ENCODE measurements at regions of chr6 and their contacts with region 1.

Region 1: DNA sequence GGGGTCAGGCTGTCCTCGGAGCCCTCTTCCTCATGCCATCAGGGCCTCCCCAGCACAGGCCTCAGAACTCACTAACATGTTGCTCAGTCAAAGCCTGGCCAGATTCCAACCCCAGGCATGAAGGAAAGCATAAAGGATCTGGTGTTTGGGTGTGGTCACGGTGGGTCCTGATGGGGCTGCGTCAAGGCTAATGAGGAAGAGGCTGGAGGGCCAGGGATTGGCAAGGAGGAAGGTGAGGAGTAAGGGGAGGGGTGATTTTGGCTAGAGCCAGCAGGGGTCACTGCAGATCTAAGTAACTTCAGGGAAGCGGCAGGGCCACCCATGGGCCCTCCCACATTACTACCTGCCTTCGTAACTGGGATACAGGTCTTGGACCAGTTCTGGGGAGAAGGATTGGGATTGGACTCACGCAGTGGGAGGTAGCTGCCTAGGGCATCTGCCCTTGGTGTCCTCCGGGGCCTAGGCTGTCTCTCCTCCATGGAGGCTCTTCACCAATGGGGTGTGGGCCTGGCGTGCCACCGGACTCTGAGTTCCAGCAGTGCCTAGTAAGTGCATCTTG is 36.2 kb upstream of the MRPS18A start:
- DNase-seq: peak; percentile 83
- ATAC-seq: peak; percentile 83
- H3K4me3 Mint-ChIP-seq: no peak overlapping the region
- H3K27ac Mint-ChIP-seq: no peak overlapping the region
- H3K4me1 Mint-ChIP-seq: peaks cover 30% of the 10 kb centered on the region
- H3K27me3 Mint-ChIP-seq: peaks cover 18% of the 10 kb centered on the region

Region 2: DNA sequence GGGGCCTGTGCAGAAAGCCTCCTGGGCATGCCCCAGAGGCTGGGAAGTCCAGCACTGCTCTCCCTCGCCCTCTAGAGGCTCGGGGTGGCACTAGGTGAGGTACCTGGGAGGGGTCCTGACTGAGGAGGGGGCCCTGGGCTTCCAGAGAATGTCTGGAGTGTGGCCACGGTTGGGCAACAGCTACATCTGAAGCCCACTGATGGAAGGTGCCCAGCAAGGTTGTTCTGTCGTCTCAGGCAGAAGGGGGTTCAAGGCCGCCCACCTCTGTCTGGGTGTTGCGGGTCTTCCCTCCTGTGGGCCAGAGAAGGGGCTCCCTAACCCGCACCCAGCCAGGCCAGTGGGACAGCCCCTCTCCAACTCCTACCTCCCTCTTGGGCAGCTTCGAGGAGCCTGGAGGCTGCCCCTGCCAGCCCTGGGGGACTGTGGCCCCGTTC is 34.8 kb after region 1 on chr6:
- CTCF ChIA-PET with region 1: interaction called, 16 read pairs
- POLR2A ChIA-PET with region 1: interaction called, 4 read pairs
- DNase-seq: no peak
- ATAC-seq: peak; percentile 54
- H3K4me3 Mint-ChIP-seq: no peak overlapping the region
- H3K27ac Mint-ChIP-seq: no peak overlapping the region
- H3K4me1 Mint-ChIP-seq: no peaks in the 10 kb centered on the region
- H3K27me3 Mint-ChIP-seq: peaks cover 22% of the 10 kb centered on the region

Region 3: DNA sequence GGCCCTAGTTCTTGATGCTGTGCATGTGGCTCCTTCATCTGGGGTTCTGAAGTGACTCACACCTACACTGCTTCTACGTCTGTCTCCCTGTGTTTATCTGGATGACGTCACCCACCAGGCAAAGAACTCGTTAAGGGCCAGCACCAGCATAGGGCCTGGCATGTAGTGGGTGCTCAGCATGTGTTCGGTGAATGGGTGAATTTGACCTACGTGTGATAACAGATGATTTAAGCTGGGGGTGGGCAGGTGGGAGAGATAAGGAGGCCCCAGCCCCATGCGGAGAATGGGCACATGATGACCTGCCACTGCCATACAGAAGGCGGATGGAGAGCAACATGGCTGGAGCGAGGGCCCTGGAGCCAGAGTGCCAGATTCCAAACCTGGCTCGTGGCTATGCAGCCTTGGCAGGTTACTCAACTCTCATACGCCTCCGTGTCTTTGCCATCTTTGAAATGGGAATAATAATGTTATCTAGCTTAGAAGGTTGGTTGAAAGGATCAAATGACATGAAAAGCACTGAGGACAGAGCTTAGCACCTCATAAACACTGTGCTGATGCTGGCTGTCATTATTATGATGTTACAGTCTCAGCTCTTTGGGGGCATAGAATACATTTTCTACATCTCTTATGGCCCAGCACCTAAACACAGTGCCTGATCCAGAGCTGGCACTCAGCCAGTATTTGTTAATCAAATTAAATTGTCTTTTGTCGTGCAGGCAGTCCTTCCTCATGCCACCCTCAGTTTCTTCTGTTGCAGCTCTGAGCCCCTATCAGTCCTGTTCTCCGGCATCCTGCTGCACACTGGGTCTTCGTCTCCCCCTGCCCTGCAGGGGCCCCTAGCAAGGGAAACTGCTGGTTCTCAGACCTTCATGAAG is 85.8 kb after region 1 on chr6:
- CTCF ChIA-PET with region 1: no interaction called
- POLR2A ChIA-PET with region 1: no interaction called
- DNase-seq: no peak
- ATAC-seq: no peak
- H3K4me3 Mint-ChIP-seq: no peak overlapping the region
- H3K27ac Mint-ChIP-seq: no peak overlapping the region
- H3K4me1 Mint-ChIP-seq: peaks cover 33% of the 10 kb centered on the region
- H3K27me3 Mint-ChIP-seq: peaks cover 4% of the 10 kb centered on the region

Measured in activated CD8-positive, alpha-beta T cell treated with anti-CD3 and anti-CD28 coated beads, Interleukin-2, amount 10 ng/mL, durations not matched to agents 7 days and 5 days (primary cell).